Naive thymus-derived CD8-positive, alpha-beta T cell (primary cell): ENCODE measurements at regions of chr19 and their contacts with region 1.

Region 1: DNA sequence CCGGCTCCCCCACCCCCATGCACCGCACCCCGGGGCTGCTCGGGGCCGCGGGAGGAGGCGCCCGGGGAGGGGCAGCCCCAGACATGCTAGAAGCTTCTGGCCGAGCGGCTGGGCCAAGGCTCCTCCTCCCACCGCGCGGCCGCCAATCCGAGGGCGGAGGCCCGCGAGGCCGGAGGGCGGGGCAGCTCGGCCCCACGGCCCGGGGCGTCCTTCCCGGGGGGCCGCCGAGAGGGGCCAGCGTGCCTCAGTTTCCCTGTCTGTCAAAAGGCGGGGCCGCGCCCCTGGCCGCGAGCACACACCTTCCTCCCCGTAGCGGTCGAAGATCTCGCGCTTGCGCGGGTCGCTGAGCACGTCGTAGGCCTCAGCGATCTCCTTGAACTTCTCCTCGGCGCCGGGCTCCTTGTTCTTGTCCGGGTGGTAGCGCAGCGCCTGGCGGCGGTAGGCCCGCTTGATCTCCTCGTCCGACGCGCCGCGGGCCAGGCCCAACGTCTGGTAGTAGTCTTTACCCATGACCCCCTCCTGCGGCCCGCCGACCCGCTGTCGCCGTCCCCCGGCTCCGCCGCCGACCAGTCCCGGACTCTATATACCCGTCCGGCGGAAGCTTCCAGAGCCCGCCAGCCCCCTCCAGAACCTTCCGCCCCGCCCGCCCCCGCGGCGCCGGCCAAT is at the start of gene DNAJB1:
- DNase-seq: peak in 7 of 10 donors; percentile 45 to 80 (median 59)
- ATAC-seq: peak; percentile 38 to 56
- H3K4me3 Mint-ChIP-seq: peak within 1 kb of the TSS; percentile 93 to 99 (median 96)
- H3K27ac Mint-ChIP-seq: peak within 1 kb of the TSS; percentile 91 to 99 (median 99)
- H3K4me1 Mint-ChIP-seq: peaks cover 45 to 80% (median 75%) of the 10 kb centered on the region in 4 donors
- H3K27me3 Mint-ChIP-seq: no peaks in the 10 kb centered on the region
- polyA plus RNA-seq, gene DNAJB1: 205 to 348 (median 344) TPM

Region 2: DNA sequence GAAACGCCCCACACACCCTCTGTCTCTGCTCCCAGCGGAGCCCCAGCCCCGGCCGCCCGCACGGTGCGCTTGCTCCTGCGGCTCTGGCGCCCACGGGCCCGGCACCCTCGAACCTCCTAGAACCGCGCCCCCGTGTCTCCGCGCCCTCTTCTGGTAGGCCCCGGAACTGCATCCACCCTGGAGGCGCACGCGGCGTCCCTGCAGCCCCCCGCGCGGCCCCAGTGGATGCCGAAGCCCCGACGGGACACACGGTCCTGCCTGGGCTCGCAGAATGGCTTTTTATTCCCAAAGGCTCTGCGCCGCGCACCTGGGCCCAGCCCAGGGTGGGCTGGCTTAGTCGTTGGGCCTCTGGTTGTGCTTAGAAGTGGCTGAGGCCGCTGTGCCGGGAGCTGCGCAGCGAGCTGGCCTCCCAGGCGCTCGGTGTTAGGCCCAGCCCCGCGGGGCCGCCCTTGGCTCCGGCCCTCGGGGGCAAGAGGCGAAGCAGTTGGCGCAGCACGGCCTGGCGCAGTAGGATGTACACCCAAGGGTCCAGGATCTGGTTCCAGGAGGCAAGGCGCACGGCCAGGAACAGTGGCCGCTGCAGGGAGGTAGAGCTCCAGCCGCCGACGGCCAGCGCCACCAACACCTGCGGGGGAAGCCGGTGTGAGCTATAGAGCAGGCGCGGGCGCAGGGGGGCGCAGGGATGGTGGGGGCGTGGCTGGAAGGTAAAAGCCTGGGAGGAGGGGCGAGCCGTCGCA is 45.6 kb before region 1 on chr19:
- POLR2A ChIA-PET with region 1: interaction called, 23 read pairs
- DNase-seq: peak; percentile 66 to 93 (median 87)
- ATAC-seq: peak; percentile 82
- H3K4me3 Mint-ChIP-seq: peak overlapping the region; percentile 44 to 80 (median 70)
- H3K27ac Mint-ChIP-seq: peak overlapping the region in 2 of 10 donors; percentile 53 to 56
- H3K4me1 Mint-ChIP-seq: peaks cover 18 to 48% (median 32%) of the 10 kb centered on the region in 4 donors
- H3K27me3 Mint-ChIP-seq: peaks cover 11 to 25% (median 14%) of the 10 kb centered on the region in 5 donors

Region 3: GRCh38 chr19:14505488-14506432 is 12.2 kb before region 1 on chr19:
- POLR2A ChIA-PET with region 1: interaction called, 609 read pairs
- DNase-seq: peak; percentile 59 to 90 (median 76)
- ATAC-seq: peak; percentile 31 to 42
- H3K4me3 Mint-ChIP-seq: peak overlapping the region; percentile 56 to 79 (median 71)
- H3K27ac Mint-ChIP-seq: peak overlapping the region; percentile 90 to 99 (median 98)
- H3K4me1 Mint-ChIP-seq: peaks cover 21 to 72% (median 62%) of the 10 kb centered on the region in 4 donors
- H3K27me3 Mint-ChIP-seq: no peaks in the 10 kb centered on the region

Region 4: GRCh38 chr19:14542711-14543328 is 24.8 kb after region 1 on chr19:
- POLR2A ChIA-PET with region 1: interaction called, 207 read pairs
- DNase-seq: no peak
- ATAC-seq: no peak
- H3K4me3 Mint-ChIP-seq: no peak overlapping the region
- H3K27ac Mint-ChIP-seq: peak overlapping the region in 2 of 10 donors; percentile 25 to 66
- H3K4me1 Mint-ChIP-seq: peaks cover 16 to 64% (median 37%) of the 10 kb centered on the region in 4 donors
- H3K27me3 Mint-ChIP-seq: no peaks in the 10 kb centered on the region

Region 5: DNA sequence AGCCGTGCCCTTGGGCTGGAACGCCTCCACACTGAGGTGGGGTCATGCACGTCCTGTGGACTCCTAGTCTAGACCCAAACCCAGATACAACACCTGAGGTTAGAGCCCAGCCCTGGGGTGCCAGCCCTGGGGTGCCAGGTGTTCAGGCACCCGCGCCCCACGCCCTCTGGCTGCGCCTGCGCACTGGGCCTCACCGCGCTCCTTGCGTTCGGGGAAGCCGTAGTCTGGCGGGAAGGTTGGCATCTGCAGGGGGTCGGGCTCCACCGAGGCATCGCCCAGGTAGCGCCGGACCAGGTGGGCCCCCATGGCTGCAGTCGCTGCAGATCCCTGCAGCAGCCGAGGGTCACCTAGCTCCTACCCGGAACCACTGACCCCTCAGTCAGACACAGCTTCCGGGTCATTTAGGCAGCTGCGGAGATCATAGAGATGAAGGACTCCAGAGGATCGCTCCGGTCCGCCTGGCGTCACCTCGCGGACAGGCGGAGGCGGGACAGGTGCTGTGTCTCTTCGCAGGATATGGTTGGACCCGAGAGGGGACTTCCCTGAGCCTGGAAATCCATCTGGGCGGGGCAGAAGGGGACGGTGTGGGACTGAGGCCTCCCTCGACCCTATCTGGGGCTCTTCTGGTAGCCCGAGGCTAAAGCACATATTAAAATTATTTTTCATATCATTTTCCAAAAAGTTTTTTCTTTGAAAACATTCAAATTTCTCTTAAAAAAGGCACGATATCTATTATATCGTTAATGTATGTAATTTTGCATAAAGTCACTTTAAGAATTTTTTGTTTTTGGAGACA is 53.9 kb after region 1 on chr19 and contains the start of gene NDUFB7:
- POLR2A ChIA-PET with region 1: interaction called, 15 read pairs
- DNase-seq: peak; percentile 76 to 94 (median 87)
- ATAC-seq: peak; percentile 93 to 97
- H3K4me3 Mint-ChIP-seq: peak within 1 kb of the TSS; percentile 93 to 98 (median 95)
- H3K27ac Mint-ChIP-seq: peak within 1 kb of the TSS; percentile 83 to 96 (median 94)
- H3K4me1 Mint-ChIP-seq: peaks cover 19 to 53% (median 43%) of the 10 kb centered on the region in 4 donors
- H3K27me3 Mint-ChIP-seq: no peaks in the 10 kb centered on the region
- polyA plus RNA-seq, gene NDUFB7: 209 to 236 (median 230) TPM

Region 6: DNA sequence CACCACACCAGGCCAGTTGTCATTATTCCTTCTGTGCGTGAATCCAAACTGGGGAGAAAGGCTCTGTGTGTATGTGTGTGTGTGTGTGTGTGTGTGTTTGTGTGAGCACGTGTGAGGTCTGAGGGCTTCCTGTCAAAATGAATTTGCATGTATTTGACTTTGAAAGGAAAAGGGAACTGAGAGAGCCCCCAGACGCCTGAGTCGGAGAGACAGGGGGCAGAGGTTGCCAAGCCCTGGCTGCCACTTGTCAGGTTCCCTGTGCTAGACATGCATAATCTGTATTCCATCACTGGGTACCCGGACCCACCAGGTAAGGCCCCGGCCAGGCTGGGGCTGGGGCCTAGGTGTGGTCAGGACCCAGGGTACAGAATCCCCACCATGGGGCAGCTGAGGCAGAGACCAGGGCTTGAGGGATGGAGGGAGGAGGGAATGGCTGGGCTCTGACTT is 64.9 kb after region 1 on chr19 and contains the start of gene CLEC17A:
- POLR2A ChIA-PET with region 1: no interaction called
- DNase-seq: peak in 1 of 10 donors; percentile 33
- ATAC-seq: peak in 1 of 2 donors; percentile 41
- H3K4me3 Mint-ChIP-seq: peak within 1 kb of the TSS in 2 of 10 donors; percentile 58 to 88
- H3K27ac Mint-ChIP-seq: peak within 1 kb of the TSS in 3 of 10 donors; percentile 24 to 83 (median 57)
- H3K4me1 Mint-ChIP-seq: peaks cover 0 to 22% (median 0%) of the 10 kb centered on the region in 4 donors
- H3K27me3 Mint-ChIP-seq: peaks cover 0 to 3% (median 0%) of the 10 kb centered on the region in 5 donors
- polyA plus RNA-seq, gene CLEC17A: not detected